GM10248 (cell line): ENCODE measurements at regions of chr1 and their contacts with region 1.

Region 1: GRCh38 chr1:162391790-162392563 is 10.4 kb downstream of the C1orf226 start:
- DNase-seq: peak; percentile 51
- CTCF ChIP-seq: peak; percentile 80

Region 2: DNA sequence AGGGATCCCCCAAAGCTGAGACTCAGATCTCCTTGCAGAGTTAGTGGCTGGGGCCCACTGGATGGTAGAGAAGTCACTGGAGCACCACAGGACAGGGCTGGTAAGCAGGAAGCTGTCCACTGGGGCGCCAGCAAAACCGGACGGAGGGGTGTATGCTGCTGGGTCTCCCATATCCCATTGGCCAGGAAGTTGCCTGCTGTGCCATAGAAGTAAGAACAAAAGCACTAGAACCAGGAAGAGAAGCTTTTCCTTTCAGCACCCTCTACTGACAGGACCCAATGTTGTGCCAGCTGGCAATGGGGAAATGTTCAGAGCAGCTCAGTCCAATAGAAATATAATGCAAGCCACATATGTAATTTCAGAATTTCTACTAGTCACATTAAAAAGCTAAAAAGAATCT is 161.9 kb before region 1 on chr1:
- CTCF ChIA-PET with region 1: no interaction called
- POLR2A ChIA-PET with region 1: no interaction called
- DNase-seq: no peak
- CTCF ChIP-seq: no peak

Region 3: GRCh38 chr1:162373541-162374375 is 18.2 kb before region 1 on chr1:
- CTCF ChIA-PET with region 1: interaction called, 10 read pairs
- POLR2A ChIA-PET with region 1: no interaction called
- DNase-seq: no peak
- CTCF ChIP-seq: no peak

Region 4: GRCh38 chr1:162381383-162381782 is 10.6 kb before region 1 on chr1 and contains the start of gene C1orf226:
- CTCF ChIA-PET with region 1: interaction called, 21 read pairs
- POLR2A ChIA-PET with region 1: no interaction called
- DNase-seq: no peak
- CTCF ChIP-seq: no peak